Transverse colon (tissue), 4 donors: ENCODE measurements at regions of chr22 and their contacts with region 1.

Region 1: DNA sequence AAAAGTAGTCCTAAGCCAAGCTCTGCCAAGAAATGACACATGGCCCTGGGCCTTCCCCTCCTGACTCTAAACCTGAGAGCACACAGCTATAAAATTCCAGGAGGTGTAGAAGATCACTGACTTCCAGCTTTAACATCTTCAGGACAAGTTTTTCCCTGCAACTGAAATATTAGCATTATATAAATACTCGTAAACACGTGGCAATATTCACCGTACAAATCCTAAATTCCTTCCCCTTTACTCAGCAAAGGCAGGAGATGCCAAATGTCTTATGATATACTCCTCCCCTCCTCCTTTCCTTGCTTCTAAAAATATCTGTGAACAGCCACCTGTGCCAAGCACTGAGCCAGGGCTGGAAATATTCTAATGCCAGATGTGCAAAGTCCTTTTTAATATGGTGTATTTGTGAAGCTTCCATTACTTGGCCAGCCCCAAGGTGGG is 194.0 kb downstream of the LARGE1 start:
- DNase-seq: no peak
- H3K4me3 ChIP-seq: no peak overlapping the region
- H3K27ac ChIP-seq: peak overlapping the region in 3 of 4 donors; percentile 27 to 53 (median 44)
- H3K4me1 ChIP-seq: peaks cover 0 to 11% (median 0%) of the 10 kb centered on the region in 4 donors
- H3K27me3 ChIP-seq: no peaks in the 10 kb centered on the region
- CTCF ChIP-seq: no peak
- EP300 ChIP-seq: peak; percentile 23
- POLR2A ChIP-seq: no peak

Region 2: DNA sequence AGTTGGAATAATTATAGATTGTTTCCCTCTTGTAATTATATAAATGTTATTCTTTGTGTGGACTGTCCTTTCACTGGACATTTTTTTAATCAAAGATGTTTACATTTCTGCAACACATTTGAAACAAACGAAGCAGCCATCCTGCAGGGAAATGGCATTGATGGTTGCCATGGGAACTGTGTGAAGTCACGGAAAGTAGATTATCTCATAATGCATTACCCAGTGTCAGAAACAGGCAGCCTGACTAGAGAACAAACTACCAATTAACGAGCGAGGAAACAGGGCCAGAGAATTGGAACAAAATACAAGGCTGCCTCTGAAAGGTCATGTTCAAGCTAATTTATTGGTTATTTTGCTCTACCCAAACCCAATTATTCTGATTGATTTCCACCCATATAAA is 290.9 kb after region 1 on chr22:
- in situ Hi-C with region 1: no loop called
- intact Hi-C with region 1: loop called (anchors 5 kb)
- DNase-seq: no peak
- H3K4me3 ChIP-seq: no peak overlapping the region
- H3K27ac ChIP-seq: no peak overlapping the region
- H3K4me1 ChIP-seq: no peaks in the 10 kb centered on the region
- H3K27me3 ChIP-seq: no peaks in the 10 kb centered on the region
- CTCF ChIP-seq: no peak
- EP300 ChIP-seq: no peak
- POLR2A ChIP-seq: no peak